Caco-2 (cell line): ENCODE measurements at regions of chr12 and their contacts with region 1.

Region 1: GRCh38 chr12:70849265-70849960 is 71.1 kb downstream of the PTPRR start:
- DNase-seq: peak in 1 of 2 experiments; percentile 18
- H3K4me3 ChIP-seq: no peak overlapping the region
- H3K4me3 Mint-ChIP-seq: no peak overlapping the region
- H3K27ac Mint-ChIP-seq: no peak overlapping the region
- H3K4me1 ChIP-seq: no peaks in the 10 kb centered on the region
- H3K4me1 Mint-ChIP-seq: no peaks in the 10 kb centered on the region
- H3K27me3 ChIP-seq: no peaks in the 10 kb centered on the region
- H3K27me3 Mint-ChIP-seq: peaks cover 2% of the 10 kb centered on the region
- CTCF ChIP-seq: peak; percentile 41 to 55

Region 2: DNA sequence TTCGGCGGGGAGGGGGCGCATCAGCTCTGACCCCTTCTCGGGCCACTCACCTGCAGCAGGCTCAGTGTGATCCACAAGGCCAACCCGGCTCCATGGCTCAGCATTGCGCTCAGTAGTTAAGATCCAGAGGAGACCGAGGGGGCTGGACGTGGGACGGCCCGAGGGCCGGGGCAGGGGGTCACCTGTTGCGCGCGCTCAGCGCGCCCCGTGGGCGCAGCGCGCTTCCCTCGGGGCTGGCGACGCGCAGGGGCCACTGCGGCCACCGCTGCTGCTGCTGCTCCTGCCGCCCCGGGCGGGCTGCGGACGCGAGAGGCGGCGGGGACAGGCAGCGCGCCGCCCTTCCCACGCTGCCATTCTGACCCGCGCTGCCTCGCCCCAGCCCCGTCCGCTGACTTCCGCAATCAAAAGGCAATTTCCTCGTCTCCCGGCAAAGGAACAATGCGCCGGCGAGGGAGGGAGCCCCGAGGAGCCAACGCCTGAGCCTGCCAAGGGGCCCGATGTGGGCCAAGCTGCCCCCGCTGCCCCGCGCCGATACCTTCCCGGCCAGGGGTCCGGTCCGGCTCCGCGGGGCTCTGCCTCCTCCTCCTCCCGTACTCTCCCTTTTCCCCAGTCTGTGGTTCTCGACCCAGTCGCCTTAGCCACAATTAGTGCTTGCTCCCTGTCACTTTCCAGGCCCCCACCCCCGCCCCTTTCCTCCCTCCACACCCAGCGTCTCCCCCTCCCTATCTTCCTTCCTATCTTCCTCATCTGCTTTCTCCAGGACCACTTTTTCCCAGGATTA is 239.5 kb before region 1 on chr12:
- CTCF ChIA-PET with region 1: no interaction called
- POLR2A ChIA-PET with region 1: no interaction called
- intact Hi-C with region 1: loop called (anchors 10 kb)
- DNase-seq: peak; percentile 39 to 41
- H3K4me3 ChIP-seq: peak overlapping the region; percentile 55
- H3K4me3 Mint-ChIP-seq: peak overlapping the region; percentile 67
- H3K27ac Mint-ChIP-seq: no peak overlapping the region
- H3K4me1 ChIP-seq: no peaks in the 10 kb centered on the region
- H3K4me1 Mint-ChIP-seq: no peaks in the 10 kb centered on the region
- H3K27me3 ChIP-seq: peaks cover 2% of the 10 kb centered on the region; the same call in 1 of the 2 replicates
- H3K27me3 Mint-ChIP-seq: peaks cover 15% of the 10 kb centered on the region
- CTCF ChIP-seq: no peak

Region 3: GRCh38 chr12:71014180-71014785 is 164.9 kb after region 1 on chr12:
- CTCF ChIA-PET with region 1: interaction called, 8 read pairs
- POLR2A ChIA-PET with region 1: no interaction called
- intact Hi-C with region 1: loop called (anchors 1 kb)
- DNase-seq: peak in 1 of 2 experiments; percentile 40
- H3K4me3 ChIP-seq: no peak overlapping the region
- H3K4me3 Mint-ChIP-seq: no peak overlapping the region
- H3K27ac Mint-ChIP-seq: no peak overlapping the region
- H3K4me1 ChIP-seq: peaks cover 12% of the 10 kb centered on the region
- H3K4me1 Mint-ChIP-seq: peaks cover 13% of the 10 kb centered on the region
- H3K27me3 ChIP-seq: no peaks in the 10 kb centered on the region
- H3K27me3 Mint-ChIP-seq: no peaks in the 10 kb centered on the region
- CTCF ChIP-seq: peak; percentile 48 to 61